ENCODE measurements at regions of chr4 and their contacts with region 1.

Region 1: DNA sequence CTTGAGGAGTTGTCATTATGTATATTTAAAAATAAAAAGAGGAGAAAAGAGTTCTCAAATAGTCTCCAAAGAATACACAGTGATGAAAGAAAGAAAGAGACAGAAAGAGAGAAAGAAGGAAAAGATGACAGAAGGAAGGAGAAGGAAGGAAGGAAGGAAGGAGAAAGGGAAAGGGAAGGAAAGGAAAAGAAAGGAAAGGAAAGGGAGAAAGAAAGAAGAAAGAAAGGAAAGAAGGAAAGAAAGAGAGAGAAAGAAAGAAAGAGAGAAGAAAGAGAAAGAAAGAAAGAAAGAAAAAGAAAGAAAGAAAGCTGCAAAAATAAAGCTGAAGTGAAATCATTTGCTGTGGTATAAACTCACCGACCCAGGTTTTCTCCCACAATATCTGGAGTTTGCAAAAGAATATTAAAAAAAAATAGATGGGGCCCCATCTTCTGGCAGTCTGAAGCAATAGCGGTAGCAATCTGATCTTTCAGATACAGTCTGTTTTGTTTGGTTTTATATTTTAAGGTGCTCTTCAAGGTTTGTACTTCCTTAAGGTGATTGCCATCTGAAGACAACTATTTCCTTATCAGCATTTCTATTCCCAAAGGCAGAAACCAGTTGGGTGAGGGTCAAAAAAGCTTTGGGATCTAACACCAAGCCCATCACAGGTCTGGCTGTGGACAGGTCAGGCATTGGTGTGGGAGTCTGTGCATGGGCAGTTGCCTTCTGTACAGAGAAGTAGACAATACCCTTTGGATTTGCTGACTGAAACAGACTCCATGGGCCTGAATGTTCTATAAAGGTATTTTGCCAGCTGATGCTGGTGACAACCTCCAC is 160.4 kb downstream of the CPEB2 start:
- DNase-seq: no peak
- ATAC-seq: no peak
- H3K4me3 ChIP-seq: no peak overlapping the region
- H3K27ac ChIP-seq: no peak overlapping the region
- H3K4me1 ChIP-seq: no peaks in the 10 kb centered on the region
- H3K27me3 ChIP-seq: no peaks in the 10 kb centered on the region
- CTCF ChIP-seq: no peak
- POLR2A ChIP-seq: no peak

Region 2: DNA sequence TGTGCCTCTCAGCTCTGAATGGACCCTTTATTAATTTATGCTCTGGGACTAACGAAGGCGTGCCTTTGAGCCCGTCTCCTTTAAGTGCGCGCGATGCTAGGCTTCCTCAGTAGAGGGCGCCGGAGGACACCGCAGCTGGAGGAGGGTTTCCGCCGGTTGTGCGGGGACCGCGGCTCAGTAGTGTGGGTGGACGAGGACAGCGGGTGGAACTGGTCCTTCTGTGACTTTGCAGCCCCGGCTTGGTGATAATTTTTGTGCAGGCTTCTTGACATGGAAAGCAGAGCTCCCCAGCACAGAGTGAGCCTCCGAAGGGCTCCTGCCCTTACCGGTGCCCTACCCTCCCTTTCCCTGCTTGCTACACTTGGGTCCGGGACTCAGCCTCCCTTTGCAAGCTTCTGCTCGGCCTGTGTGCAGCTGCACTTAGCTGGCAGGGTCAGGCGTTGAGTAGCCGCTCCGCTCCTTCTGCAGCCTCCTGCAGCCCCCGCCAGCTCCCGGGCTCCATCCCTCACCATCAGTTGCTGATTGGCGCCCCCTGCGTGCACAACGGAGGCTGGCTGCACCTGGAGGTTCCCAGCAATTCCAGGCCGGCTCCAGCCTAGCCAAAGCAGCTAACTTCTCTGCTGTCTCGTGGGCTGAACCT is 1508.4 kb before region 1 on chr4:
- in situ Hi-C with region 1: no loop called
- intact Hi-C with region 1: loop called (anchors 10 kb)
- DNase-seq: peak; percentile 34 to 42
- ATAC-seq: peak; percentile 70 to 75
- H3K4me3 ChIP-seq: peak overlapping the region; percentile 45 to 63 (median 50)
- H3K27ac ChIP-seq: no peak overlapping the region
- H3K4me1 ChIP-seq: peaks cover 0 to 7% of the 10 kb centered on the region in 2 donors
- H3K27me3 ChIP-seq: peaks cover 0 to 7% (median 0%) of the 10 kb centered on the region in 3 donors
- CTCF ChIP-seq: peak in 3 of 5 experiments; percentile 58 to 76 (median 61)
- POLR2A ChIP-seq: no peak

Region 3: DNA sequence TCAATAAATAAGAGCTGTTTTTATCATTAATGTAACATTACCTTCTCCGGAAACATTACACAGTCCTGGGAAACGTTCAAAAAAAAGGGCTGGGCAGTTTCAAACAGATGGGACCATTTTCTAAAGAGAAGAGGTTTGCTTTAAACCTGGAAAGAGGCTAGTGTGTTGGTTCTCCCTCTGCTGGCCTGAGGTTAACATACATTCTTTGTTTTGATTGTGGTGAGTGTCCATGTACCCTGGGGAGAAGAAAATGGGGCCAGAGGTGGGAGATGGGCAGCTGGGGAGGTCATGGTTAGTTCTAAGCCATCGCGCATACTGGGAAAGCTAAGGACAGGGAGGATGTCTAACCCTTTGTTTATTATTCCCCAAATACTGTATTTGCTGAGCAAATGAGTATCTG is 34.3 kb after region 1 on chr4:
- in situ Hi-C with region 1: no loop called
- intact Hi-C with region 1: no loop called
- DNase-seq: no peak
- ATAC-seq: no peak
- H3K4me3 ChIP-seq: no peak overlapping the region
- H3K27ac ChIP-seq: no peak overlapping the region
- H3K4me1 ChIP-seq: no peaks in the 10 kb centered on the region
- H3K27me3 ChIP-seq: no peaks in the 10 kb centered on the region
- CTCF ChIP-seq: no peak
- POLR2A ChIP-seq: no peak

Region 4: DNA sequence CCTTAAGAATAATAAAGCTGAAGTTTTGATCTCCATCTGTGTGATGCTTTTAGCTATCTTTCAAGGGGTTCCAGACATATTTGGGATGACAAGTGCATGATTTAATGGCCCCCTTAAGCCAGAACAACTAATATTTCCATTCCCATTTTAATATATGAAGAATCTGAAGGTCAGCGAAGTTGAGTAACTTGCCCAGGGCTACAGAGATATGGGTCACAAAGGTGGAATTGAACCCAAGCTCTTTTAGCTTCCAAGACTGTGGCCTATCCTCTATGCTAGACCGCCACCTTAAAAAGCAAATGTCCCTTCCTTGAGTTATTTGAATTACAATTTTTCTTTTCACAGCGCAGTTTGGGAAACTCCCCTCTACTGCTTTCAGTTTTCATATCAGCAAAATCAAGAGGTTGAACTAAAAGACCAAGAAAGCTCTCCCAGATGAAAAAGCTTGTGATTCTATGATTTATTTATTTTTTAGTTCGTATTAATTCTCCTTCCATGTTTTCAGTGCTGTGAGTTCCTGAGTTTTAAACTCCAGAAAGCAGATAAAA is 90.6 kb after region 1 on chr4:
- in situ Hi-C with region 1: no loop called
- intact Hi-C with region 1: no loop called
- DNase-seq: no peak
- ATAC-seq: no peak
- H3K4me3 ChIP-seq: no peak overlapping the region
- H3K27ac ChIP-seq: no peak overlapping the region
- H3K4me1 ChIP-seq: no peaks in the 10 kb centered on the region
- H3K27me3 ChIP-seq: no peaks in the 10 kb centered on the region
- CTCF ChIP-seq: no peak
- POLR2A ChIP-seq: no peak

Measured in gastrocnemius medialis (tissue), 4 donors.